PC-9 (cell line): ENCODE measurements at regions of chr3 and their contacts with region 1.

Region 1: GRCh38 chr3:168047190-168047795 is 48.4 kb downstream of the GOLIM4 start:
- DNase-seq: peak in 1 of 2 experiments; percentile 79
- H3K4me3 ChIP-seq: no peak overlapping the region
- H3K27ac ChIP-seq: no peak overlapping the region
- H3K4me1 ChIP-seq: no peaks in the 10 kb centered on the region
- H3K27me3 ChIP-seq: no peaks in the 10 kb centered on the region
- CTCF ChIP-seq: peak; percentile 89

Region 2: GRCh38 chr3:167184511-167184910 is 862.8 kb before region 1 on chr3:
- CTCF ChIA-PET with region 1: no interaction called
- POLR2A ChIA-PET with region 1: no interaction called
- intact Hi-C with region 1: no loop called
- DNase-seq: peak in 1 of 2 experiments; percentile 12
- H3K4me3 ChIP-seq: no peak overlapping the region
- H3K27ac ChIP-seq: no peak overlapping the region
- H3K4me1 ChIP-seq: no peaks in the 10 kb centered on the region
- H3K27me3 ChIP-seq: no peaks in the 10 kb centered on the region
- CTCF ChIP-seq: peak; percentile 40; the same call in 1 of the 2 replicates

Region 3: DNA sequence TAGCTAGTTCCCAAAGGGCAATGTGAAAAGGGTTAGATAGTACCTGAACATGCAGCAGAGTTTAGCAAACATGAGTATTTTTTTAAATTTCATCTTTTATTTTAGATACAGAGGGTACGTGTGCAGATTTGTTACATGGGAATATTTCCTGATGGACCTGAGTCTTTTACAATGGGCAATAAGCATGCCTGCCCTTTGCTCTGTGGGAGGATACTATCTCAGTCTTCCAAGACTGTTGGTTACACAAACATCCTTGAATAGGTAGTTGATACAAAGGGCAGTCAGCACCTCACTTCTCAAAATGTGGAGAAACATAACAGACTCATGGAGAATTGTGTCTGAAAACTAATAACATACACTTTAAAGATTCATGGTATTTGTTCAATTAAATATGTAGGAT is 54.9 kb before region 1 on chr3:
- CTCF ChIA-PET with region 1: no interaction called
- POLR2A ChIA-PET with region 1: no interaction called
- intact Hi-C with region 1: no loop called
- DNase-seq: no peak
- H3K4me3 ChIP-seq: no peak overlapping the region
- H3K27ac ChIP-seq: no peak overlapping the region
- H3K4me1 ChIP-seq: no peaks in the 10 kb centered on the region
- H3K27me3 ChIP-seq: no peaks in the 10 kb centered on the region
- CTCF ChIP-seq: no peak

Region 4: DNA sequence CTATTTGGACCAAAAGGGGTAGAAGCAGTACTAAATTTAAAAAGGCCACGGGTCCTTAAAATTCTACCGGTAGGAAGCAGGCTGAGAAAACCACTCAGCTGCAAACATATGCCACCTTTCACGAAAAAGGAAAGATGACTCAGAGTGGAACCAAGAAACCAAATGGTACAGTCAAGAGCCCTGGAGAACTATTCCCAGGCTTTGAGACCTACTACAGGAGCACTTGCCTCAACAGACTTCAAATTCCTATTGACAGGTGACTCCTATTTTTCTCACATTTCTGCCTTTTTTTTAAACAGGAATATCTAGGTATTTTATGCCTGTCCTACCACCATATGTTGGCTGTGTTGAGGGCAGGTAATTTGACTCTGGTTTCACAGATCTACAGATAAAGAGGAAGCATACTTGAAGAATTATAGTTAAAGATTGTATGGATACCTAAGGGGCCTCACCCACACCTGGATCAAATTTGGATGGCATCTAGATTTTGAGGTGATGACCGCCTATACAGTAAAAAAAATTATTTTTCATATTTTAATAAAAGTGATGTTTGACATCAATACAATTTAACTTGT is 38.3 kb after region 1 on chr3:
- CTCF ChIA-PET with region 1: no interaction called
- POLR2A ChIA-PET with region 1: no interaction called
- intact Hi-C with region 1: no loop called
- DNase-seq: no peak
- H3K4me3 ChIP-seq: no peak overlapping the region
- H3K27ac ChIP-seq: no peak overlapping the region
- H3K4me1 ChIP-seq: no peaks in the 10 kb centered on the region
- H3K27me3 ChIP-seq: no peaks in the 10 kb centered on the region
- CTCF ChIP-seq: no peak

Region 5: GRCh38 chr3:168095611-168096209 is 48.4 kb after region 1 on chr3 and contains the start of gene GOLIM4:
- CTCF ChIA-PET with region 1: interaction called, 3 read pairs
- POLR2A ChIA-PET with region 1: no interaction called
- intact Hi-C with region 1: loop called (anchors 1 kb)
- DNase-seq: peak; percentile 91 to 99
- H3K4me3 ChIP-seq: peak within 1 kb of the TSS; percentile 92
- H3K27ac ChIP-seq: peak within 1 kb of the TSS; percentile 67
- H3K4me1 ChIP-seq: peaks cover 35% of the 10 kb centered on the region
- H3K27me3 ChIP-seq: no peaks in the 10 kb centered on the region
- CTCF ChIP-seq: 0 out of 2 replicates have a peak, but pooled peaks have one; percentile 18
- total RNA-seq, gene GOLIM4: 10.9 and 17.5 TPM in 2 replicates

Region 6: DNA sequence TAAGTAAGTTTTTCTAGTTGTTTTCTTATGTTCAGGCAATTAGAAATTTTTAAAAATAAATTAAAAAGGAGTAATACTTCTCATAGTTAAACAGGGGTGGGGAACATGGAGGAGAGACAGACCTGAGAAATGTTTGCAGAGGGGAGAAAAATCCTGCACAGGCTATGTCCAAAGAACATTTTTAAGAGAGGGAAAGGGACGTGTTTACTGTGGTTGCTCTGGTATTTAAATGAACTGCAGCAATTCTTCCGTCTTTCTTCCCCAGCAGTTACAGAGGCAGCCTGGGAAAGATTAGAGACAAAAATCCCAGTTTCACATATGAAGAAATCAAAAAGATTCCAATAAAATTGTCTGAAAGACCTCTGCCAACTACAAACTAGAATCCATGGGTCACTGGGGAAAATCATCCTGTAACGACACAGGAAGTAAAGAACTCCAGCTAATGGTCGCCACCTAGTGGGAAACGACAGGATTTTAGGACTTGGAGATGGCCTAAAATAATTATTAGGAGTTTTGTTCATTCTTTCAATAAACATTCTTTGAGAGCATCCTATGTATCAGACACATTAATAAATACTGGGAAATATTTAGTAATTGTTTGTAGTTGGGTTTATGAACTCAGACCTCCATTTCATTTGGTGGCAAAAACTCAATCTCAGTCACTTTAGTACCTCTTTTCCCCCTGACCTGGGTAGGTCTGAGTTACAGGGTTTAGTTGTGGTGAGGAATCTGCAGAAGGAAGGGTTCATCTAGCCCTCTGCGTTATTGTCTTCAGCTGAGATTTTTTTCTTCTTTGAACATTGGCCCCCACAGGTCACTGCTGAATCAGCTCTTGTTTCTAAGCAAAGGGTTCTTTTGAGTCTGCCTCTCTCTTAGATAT is 118.3 kb after region 1 on chr3:
- CTCF ChIA-PET with region 1: interaction called, 16 read pairs
- POLR2A ChIA-PET with region 1: no interaction called
- intact Hi-C with region 1: loop called (anchors 1 kb)
- DNase-seq: peak; percentile 36 to 46
- H3K4me3 ChIP-seq: no peak overlapping the region
- H3K27ac ChIP-seq: no peak overlapping the region
- H3K4me1 ChIP-seq: no peaks in the 10 kb centered on the region
- H3K27me3 ChIP-seq: no peaks in the 10 kb centered on the region
- CTCF ChIP-seq: peak; percentile 87

Region 7: GRCh38 chr3:168467115-168467714 is 419.9 kb after region 1 on chr3:
- CTCF ChIA-PET with region 1: no interaction called
- POLR2A ChIA-PET with region 1: no interaction called
- intact Hi-C with region 1: loop called (anchors 1 kb)
- DNase-seq: peak in 1 of 2 experiments; percentile 34
- H3K4me3 ChIP-seq: no peak overlapping the region
- H3K27ac ChIP-seq: no peak overlapping the region
- H3K4me1 ChIP-seq: no peaks in the 10 kb centered on the region
- H3K27me3 ChIP-seq: no peaks in the 10 kb centered on the region
- CTCF ChIP-seq: peak; percentile 47

Region 8: DNA sequence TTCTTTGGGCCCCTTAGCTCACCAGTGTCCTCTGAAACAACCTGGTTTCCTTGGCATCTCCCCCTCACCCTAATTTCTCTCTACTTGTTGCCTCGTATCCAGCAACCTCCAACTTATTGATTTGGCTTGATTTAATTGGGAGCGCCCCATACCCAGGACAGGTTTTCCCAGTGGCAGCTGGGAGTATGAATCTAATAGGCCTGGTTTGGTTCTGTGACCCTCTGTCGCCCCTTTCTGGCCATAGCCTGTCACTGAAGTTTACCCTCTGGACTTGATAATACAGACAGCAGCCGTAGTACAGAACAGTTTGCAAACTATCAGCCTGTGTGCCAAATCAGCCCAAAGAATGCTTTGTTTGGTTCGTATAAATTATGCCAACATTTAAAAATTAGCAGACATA is 573.5 kb after region 1 on chr3:
- CTCF ChIA-PET with region 1: no interaction called
- POLR2A ChIA-PET with region 1: no interaction called
- intact Hi-C with region 1: loop called (anchors 2 kb)
- DNase-seq: peak in 1 of 2 experiments; percentile 18
- H3K4me3 ChIP-seq: no peak overlapping the region
- H3K27ac ChIP-seq: no peak overlapping the region
- H3K4me1 ChIP-seq: no peaks in the 10 kb centered on the region
- H3K27me3 ChIP-seq: no peaks in the 10 kb centered on the region
- CTCF ChIP-seq: peak; percentile 68

Region 9: GRCh38 chr3:168847291-168847883 is 800.1 kb after region 1 on chr3:
- CTCF ChIA-PET with region 1: no interaction called
- POLR2A ChIA-PET with region 1: no interaction called
- intact Hi-C with region 1: loop called (anchors 1 kb)
- DNase-seq: peak in 1 of 2 experiments; percentile 38
- H3K4me3 ChIP-seq: no peak overlapping the region; the same call in 1 of the 2 replicates
- H3K27ac ChIP-seq: no peak overlapping the region
- H3K4me1 ChIP-seq: no peaks in the 10 kb centered on the region
- H3K27me3 ChIP-seq: peaks cover 19% of the 10 kb centered on the region; the same call in 1 of the 2 replicates
- CTCF ChIP-seq: peak; percentile 89